Activated T-helper 1 cell treated with anti-CD3 and anti-CD28 coated beads, Interleukin-12 subunit alpha, Interleukin-12 subunit beta, Interleukin-2, Interleukin-4 antibody, amounts not matched to agents 30 ng/mL and 10 ng/mL and 1 ng/mL, durations not matched to agents 14 hours and 24 hours and 36 hours (primary cell): ENCODE measurements at regions of chr21 and their contacts with region 1.

Region 1: DNA sequence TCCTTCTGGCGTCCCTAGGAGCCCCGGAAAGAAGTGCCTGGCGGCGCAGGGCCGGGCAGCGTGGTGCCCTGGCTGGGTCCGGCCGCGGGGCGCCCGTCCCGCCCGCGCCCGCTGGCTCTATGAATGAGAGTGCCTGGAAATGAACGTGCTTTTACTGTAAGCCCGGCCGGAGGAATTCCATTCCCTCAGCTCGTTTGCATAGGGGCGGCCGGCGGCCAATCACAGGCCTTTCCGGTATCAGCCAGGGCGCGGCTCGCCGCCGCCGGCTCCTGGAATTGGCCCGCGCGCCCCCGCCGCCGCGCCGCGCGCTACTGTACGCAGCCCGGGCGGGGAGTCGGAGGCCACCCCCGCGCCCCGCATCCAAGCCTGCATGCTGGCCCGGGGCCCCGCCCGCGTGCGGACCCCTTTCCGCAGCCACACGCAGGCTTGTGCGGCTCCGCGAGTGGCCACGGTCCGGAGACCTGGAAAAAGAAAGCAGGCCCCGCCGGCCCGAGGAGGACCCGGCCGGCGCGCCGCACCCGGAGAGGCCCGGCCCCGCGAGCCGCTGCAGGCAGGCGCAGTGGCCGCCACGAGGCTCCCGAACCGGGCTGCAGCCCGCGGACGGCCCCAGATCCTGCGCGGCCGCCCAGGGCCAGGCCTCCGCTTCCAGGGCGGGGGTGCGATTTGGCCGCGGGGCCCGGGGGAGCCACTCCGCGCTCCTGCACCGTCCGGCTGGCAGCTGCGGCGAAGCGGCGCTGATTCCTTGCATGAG is 160.4 kb downstream of the RUNX1 start:
- DNase-seq: peak; percentile 80
- H3K4me3 Mint-ChIP-seq: peak overlapping the region; percentile 93
- H3K27ac Mint-ChIP-seq: peak overlapping the region; percentile 99
- H3K4me1 Mint-ChIP-seq: peaks cover 54% of the 10 kb centered on the region
- H3K27me3 Mint-ChIP-seq: peaks cover 3% of the 10 kb centered on the region

Region 2: GRCh38 chr21:34845521-34846451 is 43.0 kb before region 1 on chr21:
- intact Hi-C with region 1: loop called (anchors 1 kb)
- DNase-seq: peak; percentile 45
- H3K4me3 Mint-ChIP-seq: peak overlapping the region; percentile 64
- H3K27ac Mint-ChIP-seq: peak overlapping the region; percentile 77
- H3K4me1 Mint-ChIP-seq: peaks cover 44% of the 10 kb centered on the region
- H3K27me3 Mint-ChIP-seq: no peaks in the 10 kb centered on the region

Region 3: GRCh38 chr21:34974162-34974981 is 85.6 kb after region 1 on chr21:
- intact Hi-C with region 1: loop called (anchors 1 kb)
- DNase-seq: peak; percentile 65
- H3K4me3 Mint-ChIP-seq: peak overlapping the region; percentile 72
- H3K27ac Mint-ChIP-seq: peak overlapping the region; percentile 79
- H3K4me1 Mint-ChIP-seq: peaks cover 80% of the 10 kb centered on the region
- H3K27me3 Mint-ChIP-seq: peaks cover 12% of the 10 kb centered on the region

Region 4: DNA sequence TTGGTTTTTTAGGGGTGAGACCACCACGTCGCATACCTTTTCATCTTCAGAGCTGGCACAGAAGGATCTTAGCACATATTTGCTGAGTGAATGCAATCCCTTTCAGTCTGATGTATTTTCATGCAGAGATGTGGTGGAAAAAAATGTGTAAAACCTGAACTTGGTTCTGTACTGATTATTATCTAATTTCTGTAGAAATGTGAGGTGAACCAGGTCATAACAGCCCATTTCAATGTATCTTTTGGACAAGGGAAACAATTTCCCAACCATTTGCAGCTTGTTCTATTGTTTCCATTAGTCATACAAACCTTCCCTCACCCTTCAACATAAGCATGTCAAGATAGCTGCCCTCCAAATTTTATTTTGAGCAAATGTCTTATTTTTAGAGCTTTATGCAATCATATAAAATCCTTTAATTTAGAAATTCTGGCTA is 207.1 kb after region 1 on chr21:
- intact Hi-C with region 1: loop called (anchors 1 kb)
- DNase-seq: no peak
- H3K4me3 Mint-ChIP-seq: no peak overlapping the region
- H3K27ac Mint-ChIP-seq: peak overlapping the region; percentile 67
- H3K4me1 Mint-ChIP-seq: peaks cover 42% of the 10 kb centered on the region
- H3K27me3 Mint-ChIP-seq: no peaks in the 10 kb centered on the region

Region 5: DNA sequence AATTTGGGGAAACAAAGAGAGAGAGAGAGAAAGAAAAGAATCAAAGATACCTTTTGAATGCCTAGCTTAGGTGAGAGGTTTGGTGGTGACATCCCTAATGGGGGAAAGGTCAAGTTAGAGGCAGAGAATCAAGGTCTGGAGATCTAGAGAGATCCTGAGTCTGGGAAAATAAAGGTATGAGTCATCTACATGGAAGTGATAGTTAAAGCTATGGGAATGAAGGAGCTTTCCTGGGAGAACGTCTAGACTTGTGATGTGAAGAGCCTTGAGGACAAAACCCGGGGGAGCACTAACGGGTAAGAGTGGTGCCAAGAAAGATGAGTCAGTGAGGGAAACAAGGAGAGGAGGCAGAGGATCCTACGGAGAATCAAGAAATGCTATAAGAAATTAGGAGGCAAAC is 271.1 kb after region 1 on chr21:
- intact Hi-C with region 1: no loop called
- DNase-seq: no peak
- H3K4me3 Mint-ChIP-seq: no peak overlapping the region
- H3K27ac Mint-ChIP-seq: no peak overlapping the region
- H3K4me1 Mint-ChIP-seq: peaks cover 6% of the 10 kb centered on the region
- H3K27me3 Mint-ChIP-seq: peaks cover 2% of the 10 kb centered on the region

Region 6: DNA sequence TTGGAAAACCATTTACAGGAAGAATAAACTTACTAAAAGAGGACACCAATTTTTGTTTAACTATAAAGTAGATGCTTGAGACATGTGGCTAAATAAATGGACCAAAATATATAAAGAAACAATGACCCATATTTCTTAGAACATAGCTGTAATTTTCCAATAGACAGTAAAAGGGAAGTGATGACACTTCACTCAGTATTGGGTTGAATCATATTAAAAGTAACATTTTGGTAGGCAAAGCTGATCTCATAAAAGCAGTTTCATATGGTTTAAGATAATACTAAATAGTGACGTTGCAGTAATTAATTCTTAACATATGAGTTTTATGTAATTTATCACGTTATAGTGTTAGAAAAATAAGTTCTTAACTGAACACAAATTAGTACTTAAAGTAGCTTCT is 469.3 kb after region 1 on chr21:
- intact Hi-C with region 1: loop called (anchors 5 kb)
- DNase-seq: no peak
- H3K4me3 Mint-ChIP-seq: no peak overlapping the region
- H3K27ac Mint-ChIP-seq: peak overlapping the region; percentile 56
- H3K4me1 Mint-ChIP-seq: peaks cover 7% of the 10 kb centered on the region
- H3K27me3 Mint-ChIP-seq: no peaks in the 10 kb centered on the region

Region 7: GRCh38 chr21:36060159-36060921 is 1171.6 kb after region 1 on chr21 and contains the start of gene SETD4:
- intact Hi-C with region 1: loop called (anchors 5 kb)
- DNase-seq: peak; percentile 91
- H3K4me3 Mint-ChIP-seq: peak within 1 kb of the TSS; percentile 93
- H3K27ac Mint-ChIP-seq: peak within 1 kb of the TSS; percentile 98
- H3K4me1 Mint-ChIP-seq: peaks cover 23% of the 10 kb centered on the region
- H3K27me3 Mint-ChIP-seq: peaks cover 3% of the 10 kb centered on the region
- total RNA-seq, gene SETD4: 21.9 and 22.0 TPM in 2 replicates

Region 8: GRCh38 chr21:36235058-36235582 is 1346.4 kb after region 1 on chr21:
- intact Hi-C with region 1: no loop called
- DNase-seq: no peak
- H3K4me3 Mint-ChIP-seq: no peak overlapping the region
- H3K27ac Mint-ChIP-seq: no peak overlapping the region
- H3K4me1 Mint-ChIP-seq: peaks cover 21% of the 10 kb centered on the region
- H3K27me3 Mint-ChIP-seq: no peaks in the 10 kb centered on the region